ENCODE measurements at regions of chrX and their contacts with region 1.

Region 1: GRCh38 chrX:151151665-151152267 is 24.6 kb upstream of the GPR50 start:
- DNase-seq: peak; percentile 17
- H3K4me3 Mint-ChIP-seq: no peak overlapping the region
- H3K27ac Mint-ChIP-seq: no peak overlapping the region
- H3K4me1 Mint-ChIP-seq: no peaks in the 10 kb centered on the region
- H3K27me3 Mint-ChIP-seq: peaks cover 34% of the 10 kb centered on the region
- CTCF ChIP-seq: peak; percentile 50

Region 2: DNA sequence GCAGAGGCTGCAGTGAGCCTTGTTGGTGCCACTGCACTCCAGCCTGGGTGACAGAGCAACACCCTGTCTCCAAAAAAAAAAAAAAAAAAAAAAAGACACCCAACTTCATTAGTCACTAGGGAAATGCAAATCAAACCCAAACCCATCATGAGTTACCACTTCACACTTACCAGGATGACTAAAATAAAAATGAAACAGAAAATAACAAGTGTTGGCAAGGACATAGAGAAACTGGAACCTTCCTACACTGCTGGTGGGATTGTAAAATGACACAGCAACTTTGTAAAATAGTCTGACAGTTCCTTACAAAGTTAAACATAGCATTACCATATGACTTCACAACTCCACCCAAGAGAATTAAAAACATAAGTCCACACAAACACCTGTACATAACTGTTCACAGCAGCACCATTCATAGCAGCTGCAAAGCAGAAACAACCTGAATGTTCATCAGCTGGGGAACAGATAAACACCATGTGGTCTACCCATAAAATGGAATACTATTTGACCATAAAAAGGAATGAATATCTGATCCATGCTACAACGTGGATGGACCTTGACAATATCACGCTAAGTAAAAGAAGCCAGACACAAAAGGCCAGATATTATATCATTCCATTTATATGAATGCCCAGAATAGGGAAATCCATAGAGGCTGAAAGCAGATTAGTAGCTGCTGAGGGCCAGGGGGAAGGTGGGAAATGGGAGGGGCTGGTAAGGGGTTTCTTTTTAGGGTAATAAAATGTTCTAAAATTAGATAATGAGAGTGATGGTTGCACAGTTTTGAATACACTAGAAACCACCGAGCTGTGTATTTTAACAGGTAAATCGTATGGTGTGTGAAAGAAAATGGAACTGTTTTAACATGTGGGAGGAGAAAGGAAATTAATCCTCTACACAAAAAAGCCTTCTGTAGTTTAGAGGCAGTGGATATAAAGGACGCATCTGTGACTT is 271.6 kb before region 1 on chrX:
- CTCF ChIA-PET with region 1: no interaction called
- intact Hi-C with region 1: no loop called
- DNase-seq: no peak
- H3K4me3 Mint-ChIP-seq: no peak overlapping the region
- H3K27ac Mint-ChIP-seq: no peak overlapping the region
- H3K4me1 Mint-ChIP-seq: no peaks in the 10 kb centered on the region
- H3K27me3 Mint-ChIP-seq: no peaks in the 10 kb centered on the region
- CTCF ChIP-seq: no peak

Region 3: DNA sequence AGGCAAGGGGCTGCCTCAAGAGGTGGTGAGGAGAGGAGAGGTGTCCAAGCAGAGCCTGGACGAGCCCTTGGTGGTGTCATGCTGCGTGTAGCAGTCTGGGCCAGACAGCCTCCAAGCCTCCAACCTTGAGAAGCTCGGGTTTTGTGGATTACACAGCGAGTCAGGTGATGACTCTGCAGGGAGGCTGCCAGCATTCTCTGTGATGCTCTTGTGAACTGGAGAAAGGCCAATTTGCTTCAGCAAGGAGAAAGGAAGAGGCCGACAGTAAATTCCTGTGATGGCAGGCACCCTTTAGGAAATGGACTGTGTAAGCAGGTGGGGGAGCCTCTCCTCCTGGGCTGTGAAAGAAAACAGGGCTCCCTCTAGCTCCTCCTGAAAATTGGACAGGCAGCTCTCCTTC is 217.3 kb before region 1 on chrX:
- CTCF ChIA-PET with region 1: no interaction called
- intact Hi-C with region 1: no loop called
- DNase-seq: no peak
- H3K4me3 Mint-ChIP-seq: no peak overlapping the region
- H3K27ac Mint-ChIP-seq: no peak overlapping the region
- H3K4me1 Mint-ChIP-seq: no peaks in the 10 kb centered on the region
- H3K27me3 Mint-ChIP-seq: peaks cover 39% of the 10 kb centered on the region
- CTCF ChIP-seq: no peak

Region 4: DNA sequence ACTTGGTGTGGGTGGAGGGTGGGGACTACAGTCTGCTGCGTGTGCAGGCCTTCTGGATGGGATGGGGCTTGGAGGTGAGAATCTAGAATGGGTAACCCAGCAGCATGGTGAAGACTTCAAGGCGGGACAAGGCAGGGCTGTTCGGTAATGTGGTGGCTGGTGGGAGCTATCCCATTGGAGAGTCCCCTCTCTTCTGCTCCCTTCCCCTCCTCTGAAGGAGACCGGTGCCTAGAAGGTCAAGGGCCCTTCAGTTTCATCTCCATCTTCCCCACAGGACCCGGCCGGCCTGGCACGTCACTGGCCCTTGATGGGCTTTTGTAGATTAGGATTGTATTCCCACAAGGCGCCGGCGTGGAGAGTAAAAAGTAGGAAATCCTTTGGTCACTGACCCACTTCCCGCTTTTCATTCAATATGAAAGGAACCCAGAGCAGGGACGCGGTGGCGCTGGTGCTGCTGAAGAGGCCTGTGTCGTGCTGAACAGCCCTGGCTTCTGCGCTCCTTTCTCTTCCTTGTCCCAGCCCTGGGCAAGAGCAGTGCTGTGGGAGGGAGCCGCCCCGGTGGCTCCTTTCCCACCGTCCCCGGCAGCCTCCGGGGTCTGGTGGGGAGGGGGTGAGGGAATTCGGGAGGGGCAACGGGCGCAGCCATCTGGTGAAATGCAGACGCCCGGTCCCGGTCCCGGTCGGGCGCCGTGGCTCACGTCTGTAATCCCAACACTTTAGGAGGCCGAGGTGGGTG is 175.9 kb before region 1 on chrX:
- CTCF ChIA-PET with region 1: no interaction called
- intact Hi-C with region 1: no loop called
- DNase-seq: no peak
- H3K4me3 Mint-ChIP-seq: no peak overlapping the region
- H3K27ac Mint-ChIP-seq: no peak overlapping the region
- H3K4me1 Mint-ChIP-seq: no peaks in the 10 kb centered on the region
- H3K27me3 Mint-ChIP-seq: no peaks in the 10 kb centered on the region
- CTCF ChIP-seq: no peak

Region 5: DNA sequence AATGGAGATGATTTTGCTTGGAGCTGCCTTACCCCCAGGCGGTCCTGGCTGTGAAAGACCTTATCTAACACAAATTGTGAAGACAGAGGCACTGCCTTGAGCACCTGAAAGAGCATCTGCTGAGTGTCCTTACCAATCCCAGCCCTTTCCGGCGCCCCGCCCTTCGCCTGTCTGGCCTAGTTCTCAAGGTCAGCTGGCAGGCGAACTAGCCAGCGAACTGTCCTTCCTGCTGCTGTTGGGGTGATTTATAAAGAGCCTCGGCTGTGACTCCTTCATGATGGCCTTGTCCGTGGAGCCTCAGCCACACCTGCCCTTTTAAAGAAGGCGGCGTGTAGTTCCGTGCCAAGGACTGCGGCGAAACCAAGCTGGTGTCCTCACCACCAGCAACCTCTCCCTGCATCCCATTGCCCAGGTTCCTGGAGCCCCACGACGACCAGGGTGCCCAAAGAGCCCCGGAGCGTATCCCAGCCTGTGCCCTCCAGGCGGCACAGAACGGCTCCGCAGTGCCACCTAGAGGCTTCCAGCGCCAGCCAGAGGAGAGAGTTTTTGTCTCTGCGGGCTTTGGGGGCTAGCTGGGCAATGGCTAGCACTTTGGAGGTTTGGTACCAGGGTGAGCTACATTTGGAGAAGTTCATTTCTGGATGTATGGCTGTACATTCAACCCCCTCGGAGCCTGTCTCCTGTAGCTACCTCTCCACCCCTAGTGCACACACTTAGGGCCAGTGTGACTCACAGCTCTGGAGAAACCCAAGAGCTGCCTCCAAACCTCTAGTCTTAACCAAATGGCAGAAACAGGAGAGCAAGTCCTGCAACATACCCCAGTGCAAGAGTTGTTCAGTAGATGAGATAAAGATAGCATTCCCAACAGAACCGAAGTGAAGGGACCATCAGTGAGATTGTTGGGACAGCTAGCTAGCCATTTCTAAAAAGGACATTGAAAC is 208.4 kb after region 1 on chrX:
- CTCF ChIA-PET with region 1: interaction called, 4 read pairs
- intact Hi-C with region 1: loop called (anchors 1 kb)
- DNase-seq: peak; percentile 51
- H3K4me3 Mint-ChIP-seq: no peak overlapping the region
- H3K27ac Mint-ChIP-seq: no peak overlapping the region
- H3K4me1 Mint-ChIP-seq: no peaks in the 10 kb centered on the region
- H3K27me3 Mint-ChIP-seq: peaks cover 34% of the 10 kb centered on the region
- CTCF ChIP-seq: peak; percentile 61

Region 6: GRCh38 chrX:151488677-151489076 is 336.9 kb after region 1 on chrX:
- CTCF ChIA-PET with region 1: no interaction called
- intact Hi-C with region 1: loop called (anchors 1 kb)
- DNase-seq: peak; percentile 4
- H3K4me3 Mint-ChIP-seq: no peak overlapping the region
- H3K27ac Mint-ChIP-seq: no peak overlapping the region
- H3K4me1 Mint-ChIP-seq: no peaks in the 10 kb centered on the region
- H3K27me3 Mint-ChIP-seq: no peaks in the 10 kb centered on the region
- CTCF ChIP-seq: no peak

Region 7: DNA sequence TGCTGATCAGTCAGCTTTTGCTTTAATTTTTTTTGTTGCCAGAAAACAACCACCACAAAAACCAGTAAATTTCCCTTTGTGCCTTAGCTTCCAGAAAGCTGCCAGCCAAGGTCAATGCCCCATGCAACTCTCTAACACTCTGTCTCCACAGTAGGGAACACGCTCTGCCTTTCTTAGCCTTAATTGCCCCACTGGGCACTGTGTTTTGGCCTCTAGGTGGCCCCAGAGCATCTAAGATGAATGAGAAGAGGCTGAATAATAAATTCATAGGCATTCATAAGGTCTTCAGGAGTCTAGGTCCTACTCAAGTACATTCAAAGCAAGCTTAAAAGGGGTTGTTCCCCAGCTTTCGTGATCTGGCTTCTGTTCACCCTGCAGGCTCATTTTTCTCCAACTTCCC is 354.0 kb after region 1 on chrX:
- CTCF ChIA-PET with region 1: no interaction called
- intact Hi-C with region 1: loop called (anchors 5 kb)
- DNase-seq: peak; percentile 14
- H3K4me3 Mint-ChIP-seq: no peak overlapping the region
- H3K27ac Mint-ChIP-seq: no peak overlapping the region
- H3K4me1 Mint-ChIP-seq: no peaks in the 10 kb centered on the region
- H3K27me3 Mint-ChIP-seq: peaks cover 38% of the 10 kb centered on the region
- CTCF ChIP-seq: no peak

Region 8: GRCh38 chrX:151680805-151681204 is 529.0 kb after region 1 on chrX:
- CTCF ChIA-PET with region 1: interaction called, 6 read pairs
- intact Hi-C with region 1: loop called (anchors 1 kb)
- DNase-seq: peak; percentile 70
- H3K4me3 Mint-ChIP-seq: no peak overlapping the region
- H3K27ac Mint-ChIP-seq: no peak overlapping the region
- H3K4me1 Mint-ChIP-seq: no peaks in the 10 kb centered on the region
- H3K27me3 Mint-ChIP-seq: peaks cover 72% of the 10 kb centered on the region
- CTCF ChIP-seq: peak; percentile 44

Measured in Calu3 (cell line).